Prostate gland (tissue), 2 donors: ENCODE measurements at regions of chr13 and their contacts with region 1.

Region 1: GRCh38 chr13:35720690-35721554 is 244.4 kb upstream of the MAB21L1 start:
- DNase-seq: peak; percentile 19
- H3K4me3 ChIP-seq: no peak overlapping the region
- H3K27ac ChIP-seq: no peak overlapping the region
- H3K4me1 ChIP-seq: no peaks in the 10 kb centered on the region
- H3K27me3 ChIP-seq: no peaks in the 10 kb centered on the region
- CTCF ChIP-seq: peak; percentile 71 to 87 (median 82)
- POLR2A ChIP-seq: no peak

Region 2: DNA sequence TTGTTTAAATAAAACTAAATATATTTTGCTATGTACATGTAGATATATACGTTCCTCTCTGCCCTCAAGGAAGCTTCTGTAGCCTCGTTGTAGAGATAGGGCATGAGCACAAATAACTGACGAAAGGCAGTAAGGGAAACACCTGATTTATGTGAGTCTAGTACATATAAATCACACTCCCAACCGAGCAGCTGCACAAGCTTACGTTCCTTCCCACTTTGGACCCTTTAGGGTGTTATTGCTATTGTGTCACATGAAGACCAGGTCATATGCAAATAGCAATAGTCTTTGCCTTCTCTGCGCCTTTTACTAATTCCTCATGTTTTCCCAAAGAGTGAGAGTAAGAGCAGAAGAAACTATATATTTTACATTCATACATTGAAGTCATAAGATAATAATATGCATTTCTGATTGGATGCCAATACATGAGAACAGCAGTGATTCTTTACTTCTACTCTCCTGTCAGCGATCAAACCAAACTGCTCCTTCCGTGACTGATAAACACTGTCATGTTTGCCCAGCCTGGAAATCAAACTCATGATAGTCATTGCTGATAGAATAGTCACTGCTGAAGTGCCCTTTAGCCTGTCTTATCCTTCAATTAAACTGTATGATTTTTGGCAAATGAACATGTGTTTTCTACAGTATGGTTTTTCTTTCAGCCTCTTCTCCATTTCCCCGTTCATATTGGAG is 117.2 kb before region 1 on chr13:
- intact Hi-C with region 1: no loop called
- DNase-seq: no peak
- H3K4me3 ChIP-seq: no peak overlapping the region
- H3K27ac ChIP-seq: no peak overlapping the region
- H3K4me1 ChIP-seq: no peaks in the 10 kb centered on the region
- H3K27me3 ChIP-seq: no peaks in the 10 kb centered on the region
- CTCF ChIP-seq: no peak
- POLR2A ChIP-seq: no peak

Region 3: GRCh38 chr13:35789335-35790165 is 68.6 kb after region 1 on chr13:
- intact Hi-C with region 1: loop called (anchors 5 kb)
- DNase-seq: no peak
- H3K4me3 ChIP-seq: no peak overlapping the region
- H3K27ac ChIP-seq: no peak overlapping the region
- H3K4me1 ChIP-seq: no peaks in the 10 kb centered on the region
- H3K27me3 ChIP-seq: no peaks in the 10 kb centered on the region
- CTCF ChIP-seq: peak in 3 of 4 experiments; percentile 40 to 68 (median 46)
- POLR2A ChIP-seq: no peak